ENCODE measurements at regions of chr7 and their contacts with region 1.

Region 1: DNA sequence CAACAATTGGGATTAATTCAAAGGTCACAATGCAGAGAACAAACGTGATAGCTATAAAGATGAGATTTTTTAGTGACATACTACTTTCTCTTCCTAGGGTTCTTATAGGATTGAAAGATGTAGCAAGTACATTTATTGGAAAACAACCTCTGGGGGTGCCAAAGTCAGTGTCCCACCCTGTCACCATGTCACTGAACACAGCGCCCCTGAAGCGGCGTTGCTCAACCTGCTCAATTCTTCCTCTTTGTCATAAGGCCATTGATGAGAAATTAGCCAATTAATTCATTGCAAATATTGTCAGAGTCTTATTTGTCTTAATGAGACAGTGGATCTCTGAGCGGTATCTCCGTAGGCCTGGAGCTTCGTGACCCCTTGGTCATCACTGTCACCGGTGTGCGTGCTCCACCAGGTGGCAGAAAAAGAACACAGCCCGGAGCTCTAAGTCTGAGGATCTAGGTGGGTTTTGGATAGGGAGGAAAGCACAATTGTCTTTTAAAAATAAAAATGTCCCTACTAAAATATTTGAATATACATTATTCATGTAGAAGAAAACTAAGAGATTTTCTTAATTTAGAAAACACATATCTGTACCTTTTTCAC is 362.6 kb downstream of the PAXIP1 start:
- DNase-seq: peak; percentile 69
- H3K4me3 ChIP-seq: no peak overlapping the region
- H3K27ac ChIP-seq: no peak overlapping the region
- H3K4me1 ChIP-seq: no peaks in the 10 kb centered on the region
- H3K27me3 ChIP-seq: no peaks in the 10 kb centered on the region
- CTCF ChIP-seq: no peak
- EP300 ChIP-seq: no peak
- RAD21 ChIP-seq: peak; percentile 83

Region 2: DNA sequence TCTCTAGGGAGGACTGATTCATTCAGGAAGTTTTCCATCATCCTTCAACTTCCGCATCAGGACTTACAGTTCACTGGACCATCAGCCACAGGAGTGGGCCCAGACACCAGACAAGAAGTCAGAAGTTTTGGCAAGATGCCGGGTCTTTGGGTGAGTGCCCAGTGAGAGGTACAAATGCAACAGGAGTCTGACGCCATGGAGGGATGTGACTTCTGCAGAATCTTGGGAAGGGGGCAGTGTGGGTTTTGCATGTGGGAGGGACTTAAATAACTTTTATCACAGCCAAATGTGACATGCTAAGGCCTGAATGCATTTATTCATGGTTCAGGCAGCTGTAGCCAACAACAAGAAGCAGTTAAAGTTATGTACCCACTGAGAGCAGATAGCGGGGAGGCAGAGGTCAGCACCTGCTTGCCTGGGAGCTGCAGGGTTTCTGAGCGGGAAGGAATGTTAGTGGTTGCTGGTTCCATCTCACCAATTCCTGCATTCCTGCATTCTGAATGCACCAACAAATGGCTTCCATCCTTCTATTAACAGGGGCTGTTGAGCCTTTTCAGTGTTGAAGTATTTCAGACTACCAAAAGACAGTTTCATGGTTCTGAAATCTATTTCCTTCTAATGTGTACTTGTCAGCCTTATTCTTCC is 12.6 kb before region 1 on chr7:
- CTCF ChIA-PET with region 1: interaction called, 36 read pairs
- POLR2A ChIA-PET with region 1: no interaction called
- DNase-seq: no peak
- H3K4me3 ChIP-seq: no peak overlapping the region
- H3K27ac ChIP-seq: no peak overlapping the region
- H3K4me1 ChIP-seq: peaks cover 0 to 5% of the 10 kb centered on the region in 2 experiments; a peak in 2 of 4 replicates
- H3K27me3 ChIP-seq: no peaks in the 10 kb centered on the region
- CTCF ChIP-seq: no peak
- EP300 ChIP-seq: no peak
- RAD21 ChIP-seq: no peak

Region 3: GRCh38 chr7:154684666-154685563 is 44.5 kb after region 1 on chr7:
- CTCF ChIA-PET with region 1: interaction called, 10 read pairs
- POLR2A ChIA-PET with region 1: no interaction called
- DNase-seq: peak; percentile 75
- H3K4me3 ChIP-seq: no peak overlapping the region
- H3K27ac ChIP-seq: peak overlapping the region in 1 of 2 experiments; percentile 65; a peak in 2 of 4 replicates
- H3K4me1 ChIP-seq: peaks cover 0 to 33% of the 10 kb centered on the region in 2 experiments; a peak in 2 of 4 replicates
- H3K27me3 ChIP-seq: no peaks in the 10 kb centered on the region
- CTCF ChIP-seq: no peak
- EP300 ChIP-seq: peak in 1 of 2 experiments; percentile 51; a peak in 2 of 4 replicates
- RAD21 ChIP-seq: no peak

Region 4: DNA sequence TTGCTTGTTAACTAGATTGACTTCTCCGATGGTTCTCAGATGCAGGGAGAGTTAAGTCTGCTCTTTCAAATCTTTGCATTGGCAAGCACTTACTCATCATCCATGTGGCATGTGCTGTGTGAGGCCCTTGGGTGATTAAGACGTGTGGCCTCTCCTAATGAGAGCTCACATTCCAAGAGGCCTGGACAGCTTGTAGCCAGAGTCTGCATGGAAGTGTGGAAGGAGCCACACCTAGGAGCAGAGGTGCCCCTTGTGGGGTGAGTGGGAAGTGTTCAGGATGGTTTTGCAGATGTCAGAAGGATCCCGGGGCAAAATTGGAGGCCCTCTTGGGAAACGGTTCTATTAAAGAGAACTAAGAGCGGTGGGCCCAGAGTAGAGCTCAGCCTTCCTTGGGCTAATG is 136.7 kb after region 1 on chr7:
- CTCF ChIA-PET with region 1: interaction called, 13 read pairs
- POLR2A ChIA-PET with region 1: no interaction called
- DNase-seq: peak; percentile 58
- H3K4me3 ChIP-seq: no peak overlapping the region
- H3K27ac ChIP-seq: no peak overlapping the region
- H3K4me1 ChIP-seq: peaks cover 0 to 17% of the 10 kb centered on the region in 2 experiments; a peak in 2 of 4 replicates
- H3K27me3 ChIP-seq: no peaks in the 10 kb centered on the region
- CTCF ChIP-seq: no peak
- EP300 ChIP-seq: no peak
- RAD21 ChIP-seq: peak; percentile 15; the same call in 1 of the 2 replicates

Region 5: GRCh38 chr7:154783281-154783909 is 143.0 kb after region 1 on chr7:
- CTCF ChIA-PET with region 1: interaction called, 13 read pairs
- POLR2A ChIA-PET with region 1: no interaction called
- DNase-seq: no peak
- H3K4me3 ChIP-seq: no peak overlapping the region
- H3K27ac ChIP-seq: no peak overlapping the region
- H3K4me1 ChIP-seq: no peaks in the 10 kb centered on the region
- H3K27me3 ChIP-seq: no peaks in the 10 kb centered on the region
- CTCF ChIP-seq: no peak
- EP300 ChIP-seq: no peak
- RAD21 ChIP-seq: no peak

Region 6: GRCh38 chr7:154794110-154794780 is 153.9 kb after region 1 on chr7:
- CTCF ChIA-PET with region 1: interaction called, 12 read pairs
- POLR2A ChIA-PET with region 1: no interaction called
- DNase-seq: no peak
- H3K4me3 ChIP-seq: no peak overlapping the region
- H3K27ac ChIP-seq: no peak overlapping the region
- H3K4me1 ChIP-seq: peaks cover 0 to 6% of the 10 kb centered on the region in 2 experiments; a peak in 1 of 4 replicates
- H3K27me3 ChIP-seq: no peaks in the 10 kb centered on the region
- CTCF ChIP-seq: no peak
- EP300 ChIP-seq: no peak
- RAD21 ChIP-seq: no peak